ENCODE measurements at regions of chr20 and their contacts with region 1.

Region 1: GRCh38 chr20:56554869-56555268 is 21.8 kb downstream of the FAM209B start:
- DNase-seq: peak; percentile 99
- H3K4me3 Mint-ChIP-seq: peak overlapping the region; percentile 55
- H3K27ac Mint-ChIP-seq: peak overlapping the region; percentile 87
- H3K4me1 Mint-ChIP-seq: peaks cover 11% of the 10 kb centered on the region
- H3K27me3 Mint-ChIP-seq: peaks cover 10% of the 10 kb centered on the region
- CTCF ChIP-seq: no peak

Region 2: GRCh38 chr20:56487216-56487615 is 67.7 kb before region 1 on chr20:
- CTCF ChIA-PET with region 1: no interaction called
- POLR2A ChIA-PET with region 1: no interaction called
- intact Hi-C with region 1: no loop called
- DNase-seq: no peak
- H3K4me3 Mint-ChIP-seq: no peak overlapping the region
- H3K27ac Mint-ChIP-seq: no peak overlapping the region
- H3K4me1 Mint-ChIP-seq: no peaks in the 10 kb centered on the region
- H3K27me3 Mint-ChIP-seq: no peaks in the 10 kb centered on the region
- CTCF ChIP-seq: no peak

Region 3: DNA sequence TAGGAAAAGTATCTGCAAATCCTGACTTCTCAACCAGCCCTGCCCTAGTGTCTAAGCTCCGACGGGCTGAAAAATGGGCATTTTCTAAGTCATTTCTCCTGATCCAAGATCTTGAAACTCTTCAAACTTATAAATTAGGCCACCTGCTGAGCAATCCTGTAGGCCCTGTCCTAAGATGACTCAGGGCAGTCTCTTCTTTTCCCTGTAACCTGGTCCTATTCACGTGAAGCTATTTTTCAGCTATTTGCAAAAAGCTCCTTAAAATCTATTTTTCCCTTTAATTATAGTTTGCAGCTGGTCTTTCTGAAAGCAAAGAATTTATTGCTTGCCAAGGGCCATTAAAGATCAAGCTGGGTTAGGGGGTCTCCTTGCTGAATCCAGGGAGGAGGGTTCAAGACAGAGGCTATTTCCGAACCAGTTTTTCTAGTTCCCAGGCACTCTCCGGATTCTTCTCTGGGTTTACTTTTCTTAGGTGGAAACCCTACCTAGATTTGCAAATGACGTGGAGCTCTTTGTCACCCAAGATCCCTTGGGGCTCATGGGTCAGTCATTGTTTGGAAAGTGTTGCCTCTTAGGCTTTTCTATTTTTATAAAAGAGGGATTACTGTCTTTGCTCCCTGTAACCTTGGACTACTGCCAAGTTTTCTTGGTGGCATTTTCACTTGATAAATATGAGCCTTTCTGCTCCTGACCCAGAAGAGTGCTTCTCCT is 11.6 kb after region 1 on chr20:
- CTCF ChIA-PET with region 1: interaction called, 301 read pairs
- POLR2A ChIA-PET with region 1: interaction called, 13 read pairs
- intact Hi-C with region 1: no loop called
- DNase-seq: no peak
- H3K4me3 Mint-ChIP-seq: no peak overlapping the region
- H3K27ac Mint-ChIP-seq: no peak overlapping the region
- H3K4me1 Mint-ChIP-seq: no peaks in the 10 kb centered on the region
- H3K27me3 Mint-ChIP-seq: no peaks in the 10 kb centered on the region
- CTCF ChIP-seq: no peak

Region 4: DNA sequence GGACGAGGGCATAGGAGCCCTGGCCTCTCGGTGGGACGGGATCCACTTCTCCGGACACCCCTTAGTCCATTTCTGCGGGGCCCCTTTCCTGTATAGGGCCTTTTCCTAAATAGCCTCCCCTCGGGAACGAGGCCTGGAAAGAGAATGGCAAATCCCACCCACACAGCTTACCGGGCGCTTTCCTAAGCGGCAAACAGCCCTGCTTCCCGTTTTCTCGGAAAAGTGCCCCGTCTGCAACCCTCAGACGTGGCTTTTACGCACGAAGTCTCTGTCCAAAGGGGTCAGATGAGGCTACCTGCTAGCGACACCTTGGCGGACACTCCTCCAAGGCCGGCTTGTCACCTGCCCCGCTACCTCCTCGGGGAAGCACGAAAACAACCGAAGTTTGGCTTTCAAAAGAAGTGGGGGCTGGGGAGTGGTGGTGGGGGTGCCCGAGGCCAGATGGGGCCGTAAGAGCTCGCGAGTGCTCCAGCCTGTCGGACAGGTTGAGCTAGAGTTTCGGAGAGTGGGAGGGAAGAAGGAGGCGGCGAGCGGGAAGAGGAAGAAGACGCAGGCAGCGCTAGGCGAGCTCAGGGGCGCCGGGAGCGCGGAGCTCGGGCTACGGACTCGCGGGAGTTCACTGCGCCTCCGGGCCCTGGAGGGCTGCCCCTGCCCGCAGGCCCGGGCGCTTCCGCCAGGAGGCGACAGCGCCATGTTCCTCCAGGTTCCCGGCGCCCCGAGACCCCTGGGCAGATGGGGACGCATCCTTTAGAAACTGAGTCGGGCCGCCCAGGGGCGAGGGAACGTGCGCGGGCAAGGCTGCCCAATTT is 75.0 kb after region 1 on chr20:
- CTCF ChIA-PET with region 1: interaction called, 29 read pairs
- POLR2A ChIA-PET with region 1: interaction called, 14 read pairs
- intact Hi-C with region 1: loop called (anchors 1 kb)
- DNase-seq: peak; percentile 88
- H3K4me3 Mint-ChIP-seq: peak overlapping the region; percentile 90
- H3K27ac Mint-ChIP-seq: peak overlapping the region; percentile 85
- H3K4me1 Mint-ChIP-seq: peaks cover 32% of the 10 kb centered on the region
- H3K27me3 Mint-ChIP-seq: no peaks in the 10 kb centered on the region
- CTCF ChIP-seq: peak; percentile 93

Region 5: GRCh38 chr20:56974499-56975236 is 419.8 kb after region 1 on chr20:
- CTCF ChIA-PET with region 1: interaction called, 32 read pairs
- POLR2A ChIA-PET with region 1: interaction called, 9 read pairs
- intact Hi-C with region 1: loop called (anchors 1 kb)
- DNase-seq: peak; percentile 82
- H3K4me3 Mint-ChIP-seq: no peak overlapping the region
- H3K27ac Mint-ChIP-seq: no peak overlapping the region
- H3K4me1 Mint-ChIP-seq: no peaks in the 10 kb centered on the region
- H3K27me3 Mint-ChIP-seq: peaks cover 31% of the 10 kb centered on the region
- CTCF ChIP-seq: peak; percentile 80

Region 6: DNA sequence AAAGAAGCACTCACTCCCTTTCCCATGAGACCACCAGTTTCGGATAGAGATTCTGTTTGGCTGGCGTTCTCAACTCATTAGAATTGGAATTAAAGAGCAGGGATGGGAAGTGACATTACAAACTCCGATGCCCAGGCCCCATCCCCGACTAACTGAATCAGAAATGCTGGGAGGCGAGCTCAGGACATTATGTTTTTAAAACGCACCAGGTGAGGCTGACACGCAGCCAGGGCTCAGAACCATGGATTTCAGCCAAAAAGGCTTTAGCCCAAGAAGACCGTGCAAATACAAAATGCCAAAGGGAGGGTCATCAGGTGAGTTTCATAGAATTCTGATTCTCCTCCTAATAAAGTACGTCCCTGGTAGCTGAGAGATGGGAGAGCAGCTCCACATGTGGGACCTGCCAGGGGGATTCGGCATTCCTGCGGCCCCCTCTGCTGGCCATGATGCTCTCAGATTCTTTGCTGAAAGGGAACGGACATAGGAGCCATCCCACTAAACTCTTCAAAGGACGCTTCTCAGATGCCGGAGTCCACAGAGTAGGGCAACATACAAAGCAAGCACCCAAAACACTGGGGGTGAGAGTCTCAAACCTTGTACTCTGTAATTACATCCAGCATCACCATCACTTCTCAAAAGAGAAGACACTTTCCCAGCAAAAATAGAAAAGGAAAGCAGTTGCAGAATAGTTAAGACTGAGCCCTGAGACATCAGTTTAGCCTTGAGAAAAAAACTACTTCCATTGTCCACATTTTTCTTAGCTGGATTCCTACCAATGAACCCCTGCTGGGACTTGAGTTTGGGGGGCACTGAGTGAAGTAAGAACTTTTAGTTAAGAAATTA is 506.4 kb after region 1 on chr20:
- CTCF ChIA-PET with region 1: interaction called, 22 read pairs
- POLR2A ChIA-PET with region 1: interaction called, 5 read pairs
- intact Hi-C with region 1: no loop called
- DNase-seq: peak; percentile 34
- H3K4me3 Mint-ChIP-seq: no peak overlapping the region
- H3K27ac Mint-ChIP-seq: peak overlapping the region; percentile 73
- H3K4me1 Mint-ChIP-seq: peaks cover 9% of the 10 kb centered on the region
- H3K27me3 Mint-ChIP-seq: peaks cover 14% of the 10 kb centered on the region
- CTCF ChIP-seq: no peak

Region 7: DNA sequence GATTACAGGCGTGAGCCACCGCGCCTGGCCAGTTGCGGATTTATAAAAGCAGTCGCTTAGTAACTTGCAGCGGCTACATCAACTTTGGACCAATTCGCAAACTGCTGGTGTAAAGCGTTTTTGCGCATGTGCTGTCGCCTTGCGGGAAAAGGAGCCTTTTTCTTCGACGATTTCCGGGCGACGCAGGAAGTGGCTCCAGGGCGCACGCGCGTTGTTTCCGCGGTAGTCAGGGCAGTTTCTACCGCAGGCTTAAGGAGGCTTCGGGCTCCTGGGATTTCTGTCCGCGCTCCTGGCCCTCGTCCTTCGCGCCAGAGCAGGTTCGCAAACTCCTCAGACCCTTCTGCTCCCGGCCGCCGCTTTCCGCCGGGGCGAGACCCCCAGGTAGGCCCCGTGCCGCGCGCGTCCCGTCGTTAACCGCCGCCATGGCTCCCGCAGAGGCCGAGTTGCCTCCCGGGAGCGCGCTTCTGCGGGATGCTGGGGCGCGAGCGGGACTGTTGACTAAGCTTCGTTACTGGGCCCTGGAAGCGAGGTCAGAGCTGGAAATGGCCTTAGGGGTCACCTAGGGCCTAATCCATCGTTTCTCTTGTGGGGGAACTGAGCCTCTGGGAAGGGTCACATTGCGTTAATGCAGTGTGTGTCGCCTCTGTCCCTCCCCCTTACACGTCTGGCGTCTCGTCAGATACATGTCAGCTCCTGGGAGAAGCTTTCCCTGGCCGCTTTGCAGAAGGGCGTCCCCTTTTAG is 796.3 kb after region 1 on chr20 and contains the start of gene RAE1:
- CTCF ChIA-PET with region 1: interaction called, 19 read pairs
- POLR2A ChIA-PET with region 1: no interaction called
- intact Hi-C with region 1: loop called (anchors 5 kb)
- DNase-seq: peak; percentile 87
- H3K4me3 Mint-ChIP-seq: peak within 1 kb of the TSS; percentile 80
- H3K27ac Mint-ChIP-seq: peak within 1 kb of the TSS; percentile 81
- H3K4me1 Mint-ChIP-seq: peaks cover 15% of the 10 kb centered on the region
- H3K27me3 Mint-ChIP-seq: no peaks in the 10 kb centered on the region
- CTCF ChIP-seq: no peak
- total RNA-seq, gene RAE1: 46.7 and 60.3 TPM in 2 replicates